ENCODE measurements at regions of chr17 and their contacts with region 1.

Region 1: GRCh38 chr17:19362277-19363113 is at the start of gene B9D1:
- DNase-seq: peak; percentile 97
- H3K4me3 ChIP-seq: peak within 1 kb of the TSS; percentile 66 to 80 (median 68)
- H3K27ac ChIP-seq: peak within 1 kb of the TSS; percentile 79 to 89 (median 86)
- H3K4me1 ChIP-seq: peaks cover 10 to 22% (median 19%) of the 10 kb centered on the region in 4 donors
- H3K27me3 ChIP-seq: no peaks in the 10 kb centered on the region
- CTCF ChIP-seq: peak; percentile 96 to 99 (median 97)
- EP300 ChIP-seq: no peak
- POLR2A ChIP-seq: no peak
- total RNA-seq, gene B9D1: 9.5 to 13.8 (median 9.9) TPM

Region 2: DNA sequence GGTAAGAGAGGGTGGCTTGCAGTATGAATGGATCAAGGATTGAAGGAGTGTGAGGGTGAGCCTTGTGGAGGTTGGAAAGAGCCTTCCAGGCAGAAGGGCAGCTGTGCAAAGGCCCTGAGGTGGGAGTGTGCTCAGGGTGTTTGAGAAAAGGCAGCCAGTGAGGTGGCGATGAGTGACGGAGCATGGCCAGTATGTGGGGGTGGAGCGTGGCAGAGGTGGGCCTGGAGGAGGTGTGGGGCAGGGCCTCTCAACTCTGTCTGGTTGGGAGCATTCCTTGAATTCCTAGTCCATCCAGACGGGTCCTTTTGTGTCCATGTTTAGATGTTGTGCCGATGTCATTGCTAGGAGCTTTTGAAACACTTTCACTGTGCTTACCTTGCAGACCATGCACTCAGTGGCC is 74.0 kb before region 1 on chr17:
- intact Hi-C with region 1: no loop called
- DNase-seq: no peak
- H3K4me3 ChIP-seq: no peak overlapping the region
- H3K27ac ChIP-seq: peak overlapping the region; percentile 8 to 71 (median 28)
- H3K4me1 ChIP-seq: peaks cover 70 to 92% (median 89%) of the 10 kb centered on the region in 4 donors
- H3K27me3 ChIP-seq: no peaks in the 10 kb centered on the region
- CTCF ChIP-seq: no peak
- EP300 ChIP-seq: no peak
- POLR2A ChIP-seq: no peak

Region 3: GRCh38 chr17:19447085-19447583 is 84.6 kb after region 1 on chr17:
- intact Hi-C with region 1: loop called (anchors 1 kb)
- DNase-seq: peak; percentile 93
- H3K4me3 ChIP-seq: no peak overlapping the region
- H3K27ac ChIP-seq: peak overlapping the region; percentile 78 to 89 (median 86)
- H3K4me1 ChIP-seq: peaks cover 5 to 33% (median 32%) of the 10 kb centered on the region in 4 donors
- H3K27me3 ChIP-seq: no peaks in the 10 kb centered on the region
- CTCF ChIP-seq: peak in 2 of 3 experiments; percentile 99
- EP300 ChIP-seq: no peak
- POLR2A ChIP-seq: no peak

Region 4: DNA sequence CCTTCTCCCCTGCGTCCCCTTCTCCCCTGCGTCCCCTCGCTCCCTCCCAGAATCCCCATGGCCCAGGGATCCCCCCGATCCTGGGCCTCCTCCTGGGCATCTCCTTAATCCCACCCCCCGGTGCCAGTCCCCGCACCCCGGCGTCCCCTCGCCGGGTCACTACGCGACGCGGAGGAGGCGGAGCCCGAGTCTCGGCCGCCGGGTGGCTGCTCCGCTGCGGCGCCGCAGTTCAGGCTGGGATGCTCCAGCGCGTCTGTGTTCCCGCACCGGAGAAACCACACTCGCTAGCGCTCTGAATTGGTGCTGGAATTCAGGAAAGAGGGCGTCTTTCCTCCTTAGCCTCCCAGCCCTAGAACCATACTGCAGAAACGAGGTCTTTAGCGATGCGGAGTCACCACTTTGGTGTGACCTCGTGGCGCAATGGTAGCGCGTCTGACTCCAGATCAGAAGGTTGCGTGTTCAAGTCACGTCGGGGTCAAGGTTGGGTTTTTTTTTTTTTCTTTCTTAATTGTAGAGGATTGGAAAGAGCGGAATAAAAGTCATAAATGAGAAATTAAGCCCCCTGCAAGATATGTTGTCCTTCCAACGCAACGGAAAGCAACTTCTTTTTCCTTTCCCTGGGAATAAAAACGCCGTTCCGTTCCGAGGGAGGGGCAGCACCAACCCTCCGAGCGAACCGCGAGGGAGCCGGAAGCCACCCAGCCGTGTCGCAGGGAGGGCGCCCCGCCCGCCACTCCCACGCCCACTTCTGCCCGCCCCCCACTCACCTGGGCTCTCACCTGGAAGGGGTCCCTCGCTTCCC is 145.5 kb after region 1 on chr17:
- intact Hi-C with region 1: loop called (anchors 10 kb)
- DNase-seq: peak; percentile 99
- H3K4me3 ChIP-seq: peak overlapping the region; percentile 75 to 84 (median 77)
- H3K27ac ChIP-seq: peak overlapping the region; percentile 94 to 99 (median 96)
- H3K4me1 ChIP-seq: peaks cover 6 to 17% (median 10%) of the 10 kb centered on the region in 4 donors
- H3K27me3 ChIP-seq: no peaks in the 10 kb centered on the region
- CTCF ChIP-seq: no peak
- EP300 ChIP-seq: no peak
- POLR2A ChIP-seq: peak; percentile 27

Region 5: DNA sequence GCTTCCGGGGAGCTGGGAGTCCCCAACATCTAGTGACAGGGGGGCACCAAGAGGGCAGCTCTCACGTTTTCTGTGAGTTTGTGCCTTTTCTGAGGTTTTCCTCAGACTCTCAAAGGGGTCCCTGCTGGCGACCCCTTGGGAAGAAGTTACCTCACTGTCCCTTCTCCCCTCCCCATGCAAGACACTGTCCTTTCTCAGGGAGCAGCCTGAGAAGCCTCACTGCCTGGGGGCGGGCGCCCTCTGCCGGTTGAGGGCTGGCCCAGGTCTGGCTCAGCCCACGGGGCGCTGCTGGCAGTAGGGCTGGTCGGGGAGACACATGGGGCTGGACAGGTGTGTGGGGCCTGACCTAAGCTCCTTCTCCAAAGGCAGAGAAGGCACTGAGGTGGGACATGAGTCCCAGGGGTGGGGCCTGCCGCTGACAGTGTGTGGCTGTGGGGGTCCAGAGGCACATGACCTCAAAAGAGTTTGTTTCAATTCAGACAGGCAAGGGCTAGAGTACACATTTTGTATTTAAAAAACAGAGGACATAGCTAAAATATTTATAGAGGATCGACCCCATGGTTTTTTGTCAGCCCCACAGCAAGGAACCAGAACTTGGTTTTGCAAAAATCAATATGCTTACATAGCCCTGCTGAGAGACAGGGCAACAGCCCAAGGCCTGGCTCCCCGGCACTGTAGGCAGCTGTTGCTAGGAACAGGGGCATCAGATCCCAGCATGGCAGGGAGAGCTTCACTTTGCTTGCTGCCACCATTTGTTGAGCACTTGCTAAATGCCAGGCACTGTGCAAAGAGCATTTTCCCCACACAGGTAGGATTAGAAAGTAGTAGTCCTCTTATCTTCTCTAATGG is 404.2 kb after region 1 on chr17:
- intact Hi-C with region 1: loop called (anchors 10 kb)
- DNase-seq: peak; percentile 92
- H3K4me3 ChIP-seq: no peak overlapping the region
- H3K27ac ChIP-seq: no peak overlapping the region
- H3K4me1 ChIP-seq: peaks cover 0 to 31% (median 18%) of the 10 kb centered on the region in 4 donors
- H3K27me3 ChIP-seq: no peaks in the 10 kb centered on the region
- CTCF ChIP-seq: peak in 2 of 3 experiments; percentile 91 to 95
- EP300 ChIP-seq: no peak
- POLR2A ChIP-seq: no peak

Measured in esophagus muscularis mucosa (tissue), 4 donors.